Prostate gland (tissue), 2 donors: ENCODE measurements at regions of chr5 and their contacts with region 1.

Region 1: GRCh38 chr5:122704243-122705036 is 70.4 kb upstream of the SNX2 start:
- DNase-seq: peak; percentile 10
- H3K4me3 ChIP-seq: no peak overlapping the region
- H3K27ac ChIP-seq: no peak overlapping the region
- H3K4me1 ChIP-seq: no peaks in the 10 kb centered on the region
- H3K27me3 ChIP-seq: no peaks in the 10 kb centered on the region
- CTCF ChIP-seq: peak in 3 of 4 experiments; percentile 42 to 62 (median 57)
- POLR2A ChIP-seq: no peak

Region 2: DNA sequence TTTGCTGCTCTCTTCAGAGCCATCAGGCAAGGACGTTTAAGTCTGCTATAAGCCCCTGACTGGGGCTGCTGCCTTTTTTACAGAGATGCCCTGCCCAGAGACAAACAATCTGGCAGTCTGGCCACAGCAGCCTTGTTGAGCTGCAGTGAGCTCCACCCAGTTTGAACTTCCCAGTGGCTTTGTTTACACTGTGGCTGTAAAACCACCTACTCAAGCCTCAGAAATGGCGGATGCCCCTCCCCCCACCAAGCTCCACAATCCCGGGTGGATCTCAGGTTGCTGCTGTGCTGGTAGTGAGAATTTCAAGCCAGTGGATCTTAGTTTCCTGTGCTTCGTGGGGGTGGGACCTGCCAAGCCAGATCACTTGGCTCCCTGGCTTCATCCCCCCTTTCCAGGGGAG is 452.1 kb before region 1 on chr5:
- intact Hi-C with region 1: no loop called
- DNase-seq: peak; percentile 15
- H3K4me3 ChIP-seq: no peak overlapping the region
- H3K27ac ChIP-seq: no peak overlapping the region
- H3K4me1 ChIP-seq: no peaks in the 10 kb centered on the region
- H3K27me3 ChIP-seq: no peaks in the 10 kb centered on the region
- CTCF ChIP-seq: no peak
- POLR2A ChIP-seq: no peak

Region 3: GRCh38 chr5:122500245-122501075 is 204.0 kb before region 1 on chr5:
- intact Hi-C with region 1: no loop called
- DNase-seq: no peak
- H3K4me3 ChIP-seq: no peak overlapping the region
- H3K27ac ChIP-seq: no peak overlapping the region
- H3K4me1 ChIP-seq: no peaks in the 10 kb centered on the region
- H3K27me3 ChIP-seq: no peaks in the 10 kb centered on the region
- CTCF ChIP-seq: peak in 3 of 4 experiments; percentile 19 to 31 (median 25)
- POLR2A ChIP-seq: no peak

Region 4: DNA sequence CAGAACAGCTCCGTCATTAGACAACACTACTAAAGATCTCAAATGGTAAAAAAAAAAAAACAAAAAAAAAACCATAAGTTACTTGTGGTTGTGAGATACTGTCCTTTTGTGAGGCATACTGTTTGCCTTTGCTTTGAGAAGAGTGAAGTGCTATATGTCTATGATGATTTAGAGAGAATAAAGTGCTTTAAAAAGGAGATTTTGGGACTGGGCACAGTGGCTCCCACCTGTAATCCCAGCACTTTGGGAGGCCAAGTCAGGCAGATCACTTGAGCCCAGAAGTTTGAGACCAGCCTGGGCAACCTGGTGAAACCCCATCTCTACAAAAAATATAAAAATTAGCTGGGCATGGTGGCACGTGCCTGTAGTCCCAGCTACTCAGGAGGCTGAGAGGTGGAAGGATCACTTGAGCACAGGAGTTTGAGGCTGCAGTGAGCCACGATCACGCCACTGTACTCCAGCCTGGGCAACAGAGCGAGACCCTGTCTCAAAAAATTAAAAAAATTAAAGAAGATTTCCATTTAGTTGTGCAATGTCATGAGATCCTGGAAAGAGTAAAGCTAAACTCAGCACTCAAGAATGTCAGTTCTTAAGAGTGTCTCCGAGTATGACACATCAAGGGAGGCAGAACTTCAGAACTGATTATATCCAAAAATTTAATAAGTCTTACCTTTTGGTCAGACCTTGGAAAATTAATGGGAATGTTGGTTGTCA is 471.9 kb after region 1 on chr5:
- intact Hi-C with region 1: loop called (anchors 10 kb)
- DNase-seq: no peak
- H3K4me3 ChIP-seq: no peak overlapping the region
- H3K27ac ChIP-seq: no peak overlapping the region
- H3K4me1 ChIP-seq: no peaks in the 10 kb centered on the region
- H3K27me3 ChIP-seq: no peaks in the 10 kb centered on the region
- CTCF ChIP-seq: no peak
- POLR2A ChIP-seq: no peak